GM12878 (cell line): ENCODE measurements at regions of chr1 and their contacts with region 1.

Region 1: DNA sequence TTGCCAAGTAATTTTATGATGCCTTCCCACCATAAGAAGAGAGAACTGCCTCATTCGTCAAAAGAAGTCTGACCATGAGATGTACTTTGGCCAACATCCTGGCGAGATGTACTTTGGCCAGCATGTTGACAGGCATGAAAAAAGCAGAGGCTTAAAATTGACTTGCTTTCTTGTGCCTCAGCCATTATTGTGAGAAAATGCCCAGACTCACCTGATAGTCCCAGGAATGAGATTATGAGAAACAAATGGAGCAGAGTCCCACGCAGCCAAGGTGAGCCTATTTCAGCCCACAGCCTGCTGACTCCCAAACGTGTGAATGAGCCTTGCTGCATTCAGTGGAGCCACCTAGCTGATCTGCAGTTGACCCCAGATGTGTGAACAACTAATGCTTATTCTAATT is 43.5 kb upstream of the ZNF644 start:
- DNase-seq: no peak
- ATAC-seq: no peak
- H3K4me3 ChIP-seq: no peak overlapping the region
- H3K27ac ChIP-seq: no peak overlapping the region
- H3K4me1 ChIP-seq: no peaks in the 10 kb centered on the region
- H3K27me3 ChIP-seq: no peaks in the 10 kb centered on the region
- CTCF ChIP-seq: no peak
- EP300 ChIP-seq: no peak
- POLR2A ChIP-seq: no peak
- RAD21 ChIP-seq: no peak

Region 2: DNA sequence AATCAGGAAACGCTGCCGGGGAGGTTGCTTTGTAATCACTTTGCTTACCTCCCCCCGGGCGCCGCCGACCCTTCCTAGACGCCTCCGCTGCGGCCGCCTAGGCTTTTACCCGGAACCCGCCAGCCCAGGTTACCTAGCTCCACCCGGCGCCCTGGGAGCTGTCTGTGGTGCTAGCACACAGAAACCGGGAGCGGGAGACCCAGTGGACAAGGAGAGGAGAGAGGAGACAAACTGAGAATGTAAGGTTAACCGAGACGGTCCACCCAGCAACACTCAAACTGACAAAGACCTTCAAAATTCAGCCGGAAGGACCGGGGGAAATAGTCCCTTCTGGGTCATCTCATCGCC is 358.0 kb before region 1 on chr1:
- CTCF ChIA-PET with region 1: no interaction called
- POLR2A ChIA-PET with region 1: no interaction called
- RAD21 ChIA-PET with region 1: no interaction called
- SMC1A ChIA-PET with region 1: no interaction called
- in situ Hi-C with region 1: no loop called
- intact Hi-C with region 1: no loop called
- DNase-seq: no peak
- ATAC-seq: peak; percentile 44
- H3K4me3 ChIP-seq: no peak overlapping the region
- H3K27ac ChIP-seq: no peak overlapping the region
- H3K4me1 ChIP-seq: no peaks in the 10 kb centered on the region
- H3K27me3 ChIP-seq: peaks cover 16 to 18% of the 10 kb centered on the region in 2 experiments
- CTCF ChIP-seq: no peak
- EP300 ChIP-seq: no peak
- POLR2A ChIP-seq: no peak
- RAD21 ChIP-seq: no peak

Region 3: GRCh38 chr1:91007827-91008226 is 57.5 kb before region 1 on chr1:
- CTCF ChIA-PET with region 1: no interaction called
- POLR2A ChIA-PET with region 1: no interaction called
- RAD21 ChIA-PET with region 1: no interaction called
- SMC1A ChIA-PET with region 1: no interaction called
- in situ Hi-C with region 1: no loop called
- intact Hi-C with region 1: loop called (anchors 10 kb)
- DNase-seq: no peak
- ATAC-seq: no peak
- H3K4me3 ChIP-seq: no peak overlapping the region
- H3K27ac ChIP-seq: no peak overlapping the region
- H3K4me1 ChIP-seq: no peaks in the 10 kb centered on the region
- H3K27me3 ChIP-seq: no peaks in the 10 kb centered on the region
- CTCF ChIP-seq: no peak
- EP300 ChIP-seq: no peak
- POLR2A ChIP-seq: no peak
- RAD21 ChIP-seq: no peak

Region 4: GRCh38 chr1:91308544-91308943 is 243.2 kb after region 1 on chr1:
- CTCF ChIA-PET with region 1: no interaction called
- POLR2A ChIA-PET with region 1: no interaction called
- RAD21 ChIA-PET with region 1: no interaction called
- SMC1A ChIA-PET with region 1: no interaction called
- in situ Hi-C with region 1: no loop called
- intact Hi-C with region 1: no loop called
- DNase-seq: no peak
- ATAC-seq: no peak
- H3K4me3 ChIP-seq: no peak overlapping the region
- H3K27ac ChIP-seq: no peak overlapping the region
- H3K4me1 ChIP-seq: no peaks in the 10 kb centered on the region
- H3K27me3 ChIP-seq: no peaks in the 10 kb centered on the region
- CTCF ChIP-seq: no peak
- EP300 ChIP-seq: no peak
- POLR2A ChIP-seq: no peak
- RAD21 ChIP-seq: no peak